Heart left ventricle (tissue), 16 donors: ENCODE measurements at regions of chr11 and their contacts with region 1.

Region 1: DNA sequence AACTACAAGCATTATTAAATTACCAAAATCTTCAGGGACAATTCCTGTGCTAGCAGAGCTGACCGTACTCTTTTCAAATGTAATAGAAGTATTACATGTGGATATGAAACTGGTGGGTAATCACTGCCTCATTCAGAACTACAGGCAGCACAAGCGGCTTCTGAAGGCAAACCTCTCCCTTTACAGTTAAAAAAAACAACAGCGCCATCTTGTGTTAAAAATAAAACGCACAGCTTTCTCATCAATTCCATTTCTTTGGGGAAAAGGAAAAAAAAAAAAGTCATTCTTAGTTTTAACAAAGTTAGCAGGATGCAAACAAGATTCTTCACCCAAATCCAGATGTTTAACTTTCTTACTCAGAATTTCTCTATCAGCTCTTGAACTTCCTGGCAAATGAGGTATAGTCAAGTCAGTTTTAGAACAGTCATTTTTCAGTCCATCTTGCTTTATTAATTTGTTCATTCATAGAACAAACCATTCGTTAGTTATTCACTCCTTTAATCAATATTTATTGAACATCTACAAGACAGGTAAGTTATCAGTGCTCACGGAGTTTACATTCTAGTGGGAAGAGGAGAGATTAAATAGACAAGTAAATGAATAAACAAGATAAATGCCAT is 331.8 kb upstream of the MPPED2 start:
- DNase-seq: no peak
- ATAC-seq: peak in 2 of 4 donors; percentile 26 to 57
- H3K4me3 ChIP-seq: no peak overlapping the region
- H3K27ac ChIP-seq: no peak overlapping the region
- H3K4me1 ChIP-seq: peaks cover 0 to 9% (median 0%) of the 10 kb centered on the region in 12 donors
- H3K27me3 ChIP-seq: peaks cover 0 to 3% (median 0%) of the 10 kb centered on the region in 9 donors
- CTCF ChIP-seq: peak; percentile 66 to 82 (median 75)
- POLR2A ChIP-seq: no peak

Region 2: DNA sequence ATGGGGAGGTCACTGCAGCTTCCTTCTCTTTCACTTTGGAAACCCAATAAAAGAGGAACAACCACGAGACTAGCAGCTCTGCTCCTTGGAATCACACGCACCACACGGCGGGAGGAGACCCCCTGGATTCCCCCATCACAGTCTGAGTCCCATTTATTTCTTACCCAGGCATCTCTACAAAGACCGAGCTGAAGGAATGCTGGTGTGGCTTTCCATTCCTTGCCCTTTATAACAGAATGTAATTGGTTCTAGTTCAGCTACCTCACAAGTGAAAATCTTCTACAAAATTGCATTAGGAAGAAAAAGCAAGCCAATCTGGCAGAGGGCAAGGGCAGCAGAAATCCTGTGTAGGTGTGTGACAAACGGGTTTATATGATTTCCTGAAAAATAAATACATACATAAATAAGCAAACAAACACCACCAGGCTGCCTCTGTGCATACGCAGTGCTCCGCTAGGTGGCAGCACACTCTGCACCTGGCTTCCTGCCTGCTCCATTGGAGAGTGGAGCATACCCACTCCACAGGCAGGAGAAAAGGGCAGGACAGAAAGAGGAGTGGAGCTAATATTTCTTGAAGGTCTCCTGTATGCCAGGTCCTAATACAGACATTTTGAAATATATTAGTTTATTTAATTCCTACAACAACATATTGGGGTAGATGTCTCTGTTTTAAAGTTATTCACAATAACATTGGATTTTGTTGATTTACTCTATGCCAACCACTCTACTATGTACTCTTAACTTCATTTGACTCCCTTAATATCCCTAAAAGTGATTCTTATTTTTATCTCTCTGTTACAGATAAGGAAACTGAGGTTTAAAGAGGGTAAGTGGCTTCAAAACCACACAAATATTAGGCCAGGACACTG is 1574.3 kb before region 1 on chr11:
- intact Hi-C with region 1: loop called in 1 of 10 experiments (anchors 10 kb)
- DNase-seq: peak; percentile 6 to 71 (median 30)
- ATAC-seq: peak in 3 of 4 donors; percentile 56 to 77 (median 70)
- H3K4me3 ChIP-seq: no peak overlapping the region
- H3K27ac ChIP-seq: no peak overlapping the region
- H3K4me1 ChIP-seq: no peaks in the 10 kb centered on the region
- H3K27me3 ChIP-seq: peaks cover 0 to 2% (median 0%) of the 10 kb centered on the region in 9 donors
- CTCF ChIP-seq: peak; percentile 60 to 87 (median 74)
- POLR2A ChIP-seq: no peak

Region 3: GRCh38 chr11:30128269-30128932 is 789.6 kb before region 1 on chr11:
- intact Hi-C with region 1: loop called in 2 of 10 experiments (anchors 10 kb)
- DNase-seq: no peak
- ATAC-seq: no peak
- H3K4me3 ChIP-seq: no peak overlapping the region
- H3K27ac ChIP-seq: no peak overlapping the region
- H3K4me1 ChIP-seq: no peaks in the 10 kb centered on the region
- H3K27me3 ChIP-seq: no peaks in the 10 kb centered on the region
- CTCF ChIP-seq: peak; percentile 39 to 73 (median 54)
- POLR2A ChIP-seq: no peak

Region 4: GRCh38 chr11:30346068-30346688 is 571.8 kb before region 1 on chr11:
- intact Hi-C with region 1: loop called (anchors 2 to 5 kb)
- DNase-seq: no peak
- ATAC-seq: peak in 1 of 4 donors; percentile 36
- H3K4me3 ChIP-seq: no peak overlapping the region
- H3K27ac ChIP-seq: no peak overlapping the region
- H3K4me1 ChIP-seq: peaks cover 0 to 4% (median 0%) of the 10 kb centered on the region in 12 donors
- H3K27me3 ChIP-seq: no peaks in the 10 kb centered on the region
- CTCF ChIP-seq: peak; percentile 44 to 80 (median 70)
- POLR2A ChIP-seq: no peak

Region 5: GRCh38 chr11:30749268-30749667 is 168.7 kb before region 1 on chr11:
- intact Hi-C with region 1: no loop called
- DNase-seq: no peak
- ATAC-seq: no peak
- H3K4me3 ChIP-seq: no peak overlapping the region
- H3K27ac ChIP-seq: no peak overlapping the region
- H3K4me1 ChIP-seq: no peaks in the 10 kb centered on the region
- H3K27me3 ChIP-seq: no peaks in the 10 kb centered on the region
- CTCF ChIP-seq: no peak
- POLR2A ChIP-seq: no peak

Region 6: DNA sequence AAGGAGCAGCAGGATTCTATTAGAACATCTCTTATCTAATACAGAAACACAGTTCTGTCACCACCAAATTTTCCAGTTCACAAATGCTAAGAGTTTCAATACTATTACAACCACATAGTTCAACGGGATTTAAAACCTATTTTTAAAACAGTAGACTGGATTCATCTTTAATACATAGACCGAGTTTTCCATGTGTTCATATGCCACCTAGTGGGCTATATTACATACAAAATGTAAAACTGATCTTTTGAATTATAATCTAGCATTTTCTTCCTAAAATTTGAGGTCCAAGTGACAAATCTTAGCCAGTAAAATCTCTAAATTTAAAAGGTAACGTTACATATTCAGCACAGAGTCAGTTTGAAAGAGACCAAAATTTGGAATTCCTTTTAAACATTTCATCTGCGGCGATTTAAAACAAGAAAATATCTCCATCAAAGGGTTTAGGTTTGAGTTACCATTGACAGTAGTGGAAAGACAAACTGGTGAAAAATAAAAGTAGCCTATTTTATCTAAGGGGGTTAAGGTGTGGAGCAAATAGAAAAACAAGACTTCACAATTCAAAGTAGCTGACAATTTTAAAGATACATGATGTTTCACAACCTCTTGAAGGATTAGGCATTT is 62.5 kb before region 1 on chr11:
- intact Hi-C with region 1: loop called (anchors 2 to 10 kb)
- DNase-seq: no peak
- ATAC-seq: no peak
- H3K4me3 ChIP-seq: no peak overlapping the region
- H3K27ac ChIP-seq: no peak overlapping the region
- H3K4me1 ChIP-seq: peaks cover 0 to 4% (median 0%) of the 10 kb centered on the region in 12 donors
- H3K27me3 ChIP-seq: no peaks in the 10 kb centered on the region
- CTCF ChIP-seq: peak in 11 of 12 donors; percentile 32 to 73 (median 59)
- POLR2A ChIP-seq: no peak